PC-9 (cell line): ENCODE measurements at regions of chr7 and their contacts with region 1.

Region 1: GRCh38 chr7:118259115-118259514 is 34.6 kb downstream of the ANKRD7 start:
- DNase-seq: no peak
- H3K4me3 ChIP-seq: no peak overlapping the region
- H3K27ac ChIP-seq: no peak overlapping the region
- H3K4me1 ChIP-seq: no peaks in the 10 kb centered on the region
- H3K27me3 ChIP-seq: no peaks in the 10 kb centered on the region
- CTCF ChIP-seq: peak; percentile 25; the same call in 1 of the 2 replicates

Region 2: DNA sequence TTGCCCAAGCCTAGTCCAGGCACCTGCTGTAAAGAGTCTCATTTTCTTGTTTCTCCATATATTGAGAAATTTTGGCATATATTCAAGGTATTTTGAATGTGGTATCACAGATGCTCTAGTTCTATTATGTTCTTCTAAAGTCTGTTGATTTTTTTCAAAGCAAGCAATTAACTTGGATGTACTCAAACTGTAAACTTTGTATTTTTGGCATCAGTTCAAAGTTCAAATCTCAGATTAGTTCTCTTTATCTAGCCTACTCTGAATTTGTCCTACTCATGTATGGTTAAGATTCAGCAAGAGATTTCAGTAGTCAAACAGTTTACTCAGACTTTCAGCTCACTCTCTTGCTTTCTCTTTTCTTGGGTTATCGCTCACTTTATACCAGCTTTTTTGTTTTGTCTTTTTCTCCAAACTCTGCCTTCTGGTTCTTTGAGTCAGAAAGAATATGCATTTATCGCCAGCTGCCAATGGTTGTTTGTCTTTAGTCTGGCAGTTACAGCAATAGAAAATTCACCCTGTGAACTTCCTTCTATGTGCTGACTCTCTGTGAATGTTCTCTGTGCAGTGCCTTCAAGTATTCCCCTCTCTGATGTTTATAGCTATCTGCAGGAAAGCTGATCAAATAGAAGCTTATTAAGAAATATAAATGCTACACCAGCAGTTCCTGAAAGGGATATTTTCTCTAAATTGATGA is 21.4 kb after region 1 on chr7:
- CTCF ChIA-PET with region 1: no interaction called
- POLR2A ChIA-PET with region 1: no interaction called
- intact Hi-C with region 1: no loop called
- DNase-seq: no peak
- H3K4me3 ChIP-seq: no peak overlapping the region
- H3K27ac ChIP-seq: no peak overlapping the region
- H3K4me1 ChIP-seq: no peaks in the 10 kb centered on the region
- H3K27me3 ChIP-seq: no peaks in the 10 kb centered on the region
- CTCF ChIP-seq: no peak

Region 3: DNA sequence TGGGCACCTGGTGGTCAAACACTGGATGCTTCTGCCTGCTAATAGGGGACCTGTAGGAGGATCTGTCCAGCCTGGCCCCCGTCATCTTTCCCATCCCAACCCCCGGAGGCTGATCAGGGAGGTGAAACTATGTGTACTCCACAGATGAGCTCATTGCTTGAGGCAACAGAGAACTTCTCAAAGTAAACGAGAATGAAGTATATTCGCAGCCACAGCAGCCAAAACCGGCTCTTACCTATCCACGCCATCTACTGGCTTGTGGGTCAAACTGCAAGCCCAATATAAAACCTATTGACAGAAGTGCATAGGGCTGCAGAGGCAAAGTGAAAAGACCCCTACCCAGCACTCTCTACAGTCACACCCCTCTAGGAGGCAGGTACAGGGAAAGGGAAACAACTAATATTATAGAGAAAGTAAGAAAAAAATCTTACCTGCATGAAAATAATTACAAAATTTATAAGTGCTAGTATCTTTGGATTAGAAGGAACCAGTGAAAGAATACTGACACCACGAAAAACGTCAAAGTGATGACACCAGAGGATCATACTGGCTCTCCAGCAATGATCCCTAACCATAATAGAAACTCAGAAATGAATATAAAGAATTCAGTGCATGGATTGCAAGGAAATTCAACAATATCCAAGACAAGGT is 938.9 kb after region 1 on chr7:
- CTCF ChIA-PET with region 1: no interaction called
- POLR2A ChIA-PET with region 1: no interaction called
- intact Hi-C with region 1: loop called (anchors 2 kb)
- DNase-seq: peak in 1 of 2 experiments; percentile 31
- H3K4me3 ChIP-seq: no peak overlapping the region
- H3K27ac ChIP-seq: no peak overlapping the region
- H3K4me1 ChIP-seq: no peaks in the 10 kb centered on the region
- H3K27me3 ChIP-seq: no peaks in the 10 kb centered on the region
- CTCF ChIP-seq: peak; percentile 85